Caco-2 (cell line): ENCODE measurements at regions of chr12 and their contacts with region 1.

Region 1: DNA sequence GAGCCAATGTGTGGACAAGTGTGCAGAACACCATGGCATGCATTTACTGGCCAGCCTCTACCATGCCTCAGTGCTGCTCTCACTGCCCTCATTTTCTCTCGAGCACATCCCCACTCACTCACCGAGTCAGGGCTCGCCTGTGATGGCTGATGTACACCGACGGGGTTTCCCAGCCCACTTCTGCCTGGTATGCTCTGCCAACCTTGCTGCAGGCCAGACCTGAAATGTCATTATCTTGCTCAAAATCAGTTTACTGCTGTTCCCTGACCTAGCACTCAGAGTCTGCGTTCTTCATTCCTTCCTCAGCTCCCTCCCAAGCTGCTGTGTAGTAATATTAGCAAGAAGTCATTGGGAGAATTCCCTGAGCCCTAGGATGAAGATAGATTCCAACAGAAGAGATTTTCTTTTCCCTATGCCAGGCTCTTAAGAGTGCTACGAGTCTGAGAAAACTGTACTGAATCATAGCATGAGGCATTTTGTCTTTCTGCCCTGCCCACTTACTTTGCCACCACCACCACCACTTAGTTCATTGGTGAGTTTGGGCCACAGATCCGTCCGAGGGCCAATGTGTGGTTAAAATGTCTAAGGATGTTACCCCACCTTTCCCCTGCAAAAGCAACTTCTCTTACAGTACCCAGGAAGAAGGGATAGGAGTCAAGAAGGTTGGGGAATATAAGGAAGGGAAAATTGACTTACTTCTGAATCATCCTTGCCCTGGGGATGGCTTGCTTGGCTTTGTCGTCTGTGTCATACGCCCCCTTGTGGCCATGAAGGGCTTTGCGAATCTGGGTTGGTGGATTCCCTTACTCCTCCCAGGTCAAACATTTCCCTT is 51.0 kb downstream of the BMAL2 start:
- DNase-seq: peak; percentile 85 to 90
- H3K4me3 ChIP-seq: no peak overlapping the region
- H3K4me3 Mint-ChIP-seq: no peak overlapping the region
- H3K27ac Mint-ChIP-seq: no peak overlapping the region
- H3K4me1 ChIP-seq: peaks cover 7% of the 10 kb centered on the region
- H3K4me1 Mint-ChIP-seq: peaks cover 8% of the 10 kb centered on the region
- H3K27me3 ChIP-seq: no peaks in the 10 kb centered on the region
- H3K27me3 Mint-ChIP-seq: no peaks in the 10 kb centered on the region
- CTCF ChIP-seq: peak; percentile 94 to 95

Region 2: DNA sequence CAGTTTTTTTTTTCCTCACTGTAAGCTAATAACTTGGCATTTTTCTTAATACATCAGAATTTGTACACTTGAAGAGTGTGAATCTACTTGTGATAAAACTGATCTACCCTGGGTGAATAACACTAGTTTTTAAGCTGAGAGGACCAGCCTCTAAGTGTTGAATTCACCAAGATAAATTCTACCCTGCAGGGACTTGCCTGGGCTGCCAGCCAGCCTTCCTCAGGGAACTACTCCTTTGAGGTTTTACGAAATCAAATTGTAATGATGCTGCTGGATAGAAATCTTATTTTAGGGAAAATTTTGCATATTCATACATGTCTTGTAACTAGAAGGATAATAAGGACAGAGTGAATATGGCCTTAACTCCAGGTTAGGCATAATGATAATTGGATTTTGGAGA is 359.4 kb before region 1 on chr12:
- CTCF ChIA-PET with region 1: no interaction called
- POLR2A ChIA-PET with region 1: interaction called, 8 read pairs
- intact Hi-C with region 1: loop called (anchors 10 kb)
- DNase-seq: no peak
- H3K4me3 ChIP-seq: no peak overlapping the region
- H3K4me3 Mint-ChIP-seq: no peak overlapping the region
- H3K27ac Mint-ChIP-seq: no peak overlapping the region
- H3K4me1 ChIP-seq: no peaks in the 10 kb centered on the region
- H3K4me1 Mint-ChIP-seq: peaks cover 7% of the 10 kb centered on the region
- H3K27me3 ChIP-seq: no peaks in the 10 kb centered on the region
- H3K27me3 Mint-ChIP-seq: no peaks in the 10 kb centered on the region
- CTCF ChIP-seq: no peak

Region 3: GRCh38 chr12:27133022-27133590 is 250.5 kb before region 1 on chr12:
- CTCF ChIA-PET with region 1: no interaction called
- POLR2A ChIA-PET with region 1: no interaction called
- intact Hi-C with region 1: no loop called
- DNase-seq: no peak
- H3K4me3 ChIP-seq: no peak overlapping the region
- H3K4me3 Mint-ChIP-seq: no peak overlapping the region
- H3K27ac Mint-ChIP-seq: no peak overlapping the region
- H3K4me1 ChIP-seq: no peaks in the 10 kb centered on the region
- H3K4me1 Mint-ChIP-seq: no peaks in the 10 kb centered on the region
- H3K27me3 ChIP-seq: no peaks in the 10 kb centered on the region
- H3K27me3 Mint-ChIP-seq: peaks cover 14% of the 10 kb centered on the region
- CTCF ChIP-seq: no peak

Region 4: DNA sequence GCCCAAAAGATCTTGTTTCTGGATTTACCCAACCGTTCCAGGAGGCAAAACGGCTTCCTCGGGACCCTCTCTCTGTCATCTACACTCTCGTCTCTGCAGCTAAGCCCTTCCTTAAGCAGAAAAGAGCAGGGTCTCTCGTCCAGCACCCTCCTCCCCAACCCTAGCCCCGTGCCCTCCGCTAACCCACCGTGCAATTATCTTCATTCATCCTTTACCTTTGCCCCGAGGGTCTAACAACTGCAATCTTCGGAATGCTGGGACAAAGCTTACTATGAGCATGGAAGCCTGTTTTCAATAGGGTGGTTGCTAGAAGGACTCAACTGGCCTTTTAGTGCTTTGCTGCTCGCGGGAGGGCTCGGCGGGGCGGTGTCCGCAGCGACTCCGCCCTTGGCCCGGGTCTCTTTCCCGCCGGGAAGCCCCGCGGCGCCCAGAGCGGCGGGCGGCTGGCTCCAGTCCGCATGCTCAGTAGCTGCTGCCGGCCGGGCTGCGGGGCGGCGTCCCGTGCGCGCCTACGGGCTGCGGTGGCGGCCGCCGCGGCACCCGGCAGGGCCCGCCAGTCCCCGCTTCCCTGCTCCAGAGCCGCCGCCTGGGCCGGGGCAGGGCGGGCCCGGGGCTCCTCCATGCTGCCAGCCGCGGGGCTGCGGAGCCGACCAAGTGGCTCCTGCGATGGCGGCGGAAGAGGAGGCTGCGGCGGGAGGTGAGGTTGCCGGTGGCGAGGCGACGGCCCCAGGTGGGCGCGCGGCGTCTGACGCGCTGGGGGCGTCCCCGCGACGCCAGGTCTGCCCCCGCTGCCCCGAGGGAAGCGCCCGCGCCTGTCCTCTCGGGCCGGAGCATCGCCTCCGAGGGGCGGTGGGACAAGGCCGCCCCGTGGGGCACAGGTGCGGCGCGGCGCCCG is 51.0 kb before region 1 on chr12 and contains the start of gene BMAL2:
- CTCF ChIA-PET with region 1: no interaction called
- POLR2A ChIA-PET with region 1: no interaction called
- intact Hi-C with region 1: loop called (anchors 1 kb)
- DNase-seq: peak; percentile 73 to 84
- H3K4me3 ChIP-seq: peak within 1 kb of the TSS; percentile 87
- H3K4me3 Mint-ChIP-seq: peak within 1 kb of the TSS; percentile 80
- H3K27ac Mint-ChIP-seq: peak within 1 kb of the TSS; percentile 83
- H3K4me1 ChIP-seq: peaks cover 34% of the 10 kb centered on the region
- H3K4me1 Mint-ChIP-seq: peaks cover 43% of the 10 kb centered on the region
- H3K27me3 ChIP-seq: no peaks in the 10 kb centered on the region
- H3K27me3 Mint-ChIP-seq: no peaks in the 10 kb centered on the region
- CTCF ChIP-seq: no peak
- total RNA-seq, gene BMAL2: 35.4 and 36.0 TPM in 2 replicates

Region 5: GRCh38 chr12:27635349-27635972 is 251.8 kb after region 1 on chr12:
- CTCF ChIA-PET with region 1: no interaction called
- POLR2A ChIA-PET with region 1: no interaction called
- intact Hi-C with region 1: loop called (anchors 1 kb)
- DNase-seq: peak in 1 of 2 experiments; percentile 55
- H3K4me3 ChIP-seq: no peak overlapping the region
- H3K4me3 Mint-ChIP-seq: no peak overlapping the region
- H3K27ac Mint-ChIP-seq: no peak overlapping the region
- H3K4me1 ChIP-seq: peaks cover 4% of the 10 kb centered on the region; the same call in 1 of the 2 replicates
- H3K4me1 Mint-ChIP-seq: peaks cover 28% of the 10 kb centered on the region
- H3K27me3 ChIP-seq: no peaks in the 10 kb centered on the region
- H3K27me3 Mint-ChIP-seq: no peaks in the 10 kb centered on the region
- CTCF ChIP-seq: peak; percentile 69 to 83